IMR-90 (cell line): ENCODE measurements at regions of chr9 and their contacts with region 1.

Region 1: DNA sequence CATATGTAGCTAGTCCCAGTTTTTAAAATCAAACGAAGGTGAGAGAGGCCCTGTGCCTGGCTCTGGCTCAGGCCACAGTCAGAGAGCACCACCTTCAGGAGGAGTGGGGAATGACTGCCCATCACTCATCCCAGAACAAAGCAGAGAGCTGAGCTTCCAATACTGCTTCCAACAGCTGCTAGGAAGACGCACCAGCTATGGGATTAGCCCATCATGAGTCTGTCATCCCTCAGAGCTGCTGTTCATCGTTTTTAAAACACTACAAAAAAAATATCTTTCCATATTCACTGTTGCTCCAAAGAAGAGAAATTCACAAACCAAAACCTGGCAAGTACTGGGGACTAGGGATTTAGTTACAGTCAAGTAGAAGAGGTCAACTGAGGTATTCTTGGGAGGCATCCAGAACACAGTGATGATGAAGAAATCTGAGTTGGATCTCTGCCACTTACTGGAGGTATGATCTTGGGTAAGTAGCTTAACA is 102.4 kb downstream of the CDK5RAP2 start:
- DNase-seq: peak; percentile 90
- ATAC-seq: peak; percentile 96
- H3K4me3 ChIP-seq: no peak overlapping the region
- H3K27ac ChIP-seq: no peak overlapping the region; the same call in 1 of the 2 replicates
- H3K4me1 ChIP-seq: peaks cover 9% of the 10 kb centered on the region
- H3K27me3 ChIP-seq: no peaks in the 10 kb centered on the region
- CTCF ChIP-seq: peak; percentile 99
- POLR2A ChIP-seq: 0 out of 2 replicates have a peak, but pooled peaks have one; percentile 28
- RAD21 ChIP-seq: peak; percentile 99

Region 2: DNA sequence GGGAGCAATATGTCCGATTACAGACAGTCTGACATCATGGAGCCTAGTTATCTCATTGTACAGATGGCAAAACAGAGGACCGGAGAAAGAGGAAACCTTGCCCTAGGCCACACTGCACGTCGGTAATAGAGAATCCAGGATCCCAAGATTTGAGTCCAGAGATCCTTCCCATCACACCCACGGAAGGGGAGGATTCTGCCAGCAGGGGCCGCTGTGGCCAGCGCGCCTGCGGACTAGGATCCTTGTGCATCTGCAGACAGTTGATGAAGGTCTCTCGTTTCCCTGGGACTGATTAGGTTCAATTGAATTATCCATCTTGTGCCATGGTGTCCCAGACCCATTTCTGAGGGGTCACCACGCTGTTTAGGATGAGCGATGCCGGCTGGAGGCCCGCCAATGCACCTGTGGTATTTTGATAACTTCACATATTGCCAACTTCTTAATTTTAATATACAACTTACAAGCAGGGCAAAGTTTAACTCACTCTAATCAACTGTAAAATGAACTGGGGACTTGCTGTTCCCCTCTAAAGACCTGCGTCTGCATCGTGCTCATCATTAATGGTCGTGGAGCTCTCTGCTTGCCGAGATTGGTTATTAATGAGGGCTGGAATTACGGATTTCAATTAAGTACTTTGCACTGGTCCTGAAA is 515.7 kb before region 1 on chr9:
- CTCF ChIA-PET with region 1: interaction called, 5 read pairs
- POLR2A ChIA-PET with region 1: no interaction called
- dilution Hi-C with region 1: no loop called
- in situ Hi-C with region 1: loop called (anchors 10 kb)
- intact Hi-C with region 1: loop called (anchors 1 kb)
- DNase-seq: peak; percentile 29
- ATAC-seq: 0 out of 2 replicates have a peak, but pooled peaks have one; percentile 21
- H3K4me3 ChIP-seq: no peak overlapping the region
- H3K27ac ChIP-seq: no peak overlapping the region
- H3K4me1 ChIP-seq: peaks cover 5% of the 10 kb centered on the region
- H3K27me3 ChIP-seq: no peaks in the 10 kb centered on the region
- CTCF ChIP-seq: peak; percentile 60
- POLR2A ChIP-seq: no peak
- RAD21 ChIP-seq: peak; percentile 53

Region 3: GRCh38 chr9:120366646-120367019 is 110.9 kb before region 1 on chr9:
- CTCF ChIA-PET with region 1: interaction called, 5 read pairs
- POLR2A ChIA-PET with region 1: interaction called, 3 read pairs
- dilution Hi-C with region 1: no loop called
- in situ Hi-C with region 1: no loop called
- intact Hi-C with region 1: loop called (anchors 1 kb)
- DNase-seq: peak; percentile 91
- ATAC-seq: peak; percentile 90
- H3K4me3 ChIP-seq: no peak overlapping the region
- H3K27ac ChIP-seq: no peak overlapping the region
- H3K4me1 ChIP-seq: peaks cover 5% of the 10 kb centered on the region
- H3K27me3 ChIP-seq: no peaks in the 10 kb centered on the region; the same call in 1 of the 2 replicates
- CTCF ChIP-seq: peak; percentile 61
- POLR2A ChIP-seq: no peak
- RAD21 ChIP-seq: peak; percentile 55

Region 4: DNA sequence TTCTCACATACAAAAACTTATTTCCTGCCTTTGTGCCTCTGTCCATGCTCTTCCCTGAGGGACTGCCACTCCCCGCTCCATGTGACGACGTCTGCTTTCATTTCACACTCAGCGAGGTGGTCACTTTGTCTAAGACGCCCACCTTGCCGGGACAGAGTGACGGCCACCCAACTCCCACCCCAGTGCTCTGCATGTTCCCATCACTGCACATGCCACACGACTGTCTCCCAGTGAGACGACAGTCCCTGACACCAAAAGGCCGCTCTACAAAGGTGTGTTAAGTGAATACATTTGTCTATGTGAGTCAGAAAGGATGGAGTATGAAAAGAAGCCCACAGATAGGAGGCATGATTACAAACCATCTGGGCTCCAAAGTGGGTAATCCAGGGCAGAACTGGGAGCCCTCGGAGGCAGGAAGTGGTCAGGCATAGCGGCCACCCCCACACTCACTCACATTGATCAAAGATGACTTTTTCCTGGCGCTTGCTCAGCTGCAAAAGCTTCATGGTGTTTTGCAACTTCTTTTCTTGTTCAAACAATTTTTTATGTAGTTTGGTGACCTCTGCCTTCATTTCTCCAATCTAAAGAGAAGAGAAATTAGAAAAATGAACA is 83.4 kb before region 1 on chr9:
- CTCF ChIA-PET with region 1: interaction called, 7 read pairs
- POLR2A ChIA-PET with region 1: no interaction called
- dilution Hi-C with region 1: no loop called
- in situ Hi-C with region 1: no loop called
- intact Hi-C with region 1: loop called (anchors 2 kb)
- DNase-seq: peak; percentile 96
- ATAC-seq: peak; percentile 88
- H3K4me3 ChIP-seq: no peak overlapping the region
- H3K27ac ChIP-seq: peak overlapping the region; percentile 66
- H3K4me1 ChIP-seq: peaks cover 29% of the 10 kb centered on the region
- H3K27me3 ChIP-seq: no peaks in the 10 kb centered on the region
- CTCF ChIP-seq: peak; percentile 12; the same call in 1 of the 2 replicates
- POLR2A ChIP-seq: no peak
- RAD21 ChIP-seq: no peak; the same call in 1 of the 2 replicates